Adrenal gland (tissue), 19 donors: ENCODE measurements at regions of chr9 and their contacts with region 1.

Region 1: GRCh38 chr9:130689937-130690700 is 3.5 kb upstream of the EXOSC2 start:
- DNase-seq: peak; percentile 77 to 92 (median 90)
- H3K4me3 ChIP-seq: peak overlapping the region in 1 of 4 donors; percentile 45
- H3K27ac ChIP-seq: peak overlapping the region; percentile 2 to 83 (median 62)
- H3K4me1 ChIP-seq: peaks cover 5 to 20% of the 10 kb centered on the region in 2 donors
- H3K27me3 ChIP-seq: no peaks in the 10 kb centered on the region
- CTCF ChIP-seq: no peak
- POLR2A ChIP-seq: peak; percentile 72 to 92

Region 2: GRCh38 chr9:130454096-130454811 is 235.9 kb before region 1 on chr9:
- intact Hi-C with region 1: loop called in 1 of 2 experiments (anchors 2 kb)
- DNase-seq: no peak
- H3K4me3 ChIP-seq: no peak overlapping the region
- H3K27ac ChIP-seq: peak overlapping the region in 1 of 5 donors; percentile 88
- H3K4me1 ChIP-seq: peaks cover 35 to 38% of the 10 kb centered on the region in 2 donors
- H3K27me3 ChIP-seq: no peaks in the 10 kb centered on the region
- CTCF ChIP-seq: no peak
- POLR2A ChIP-seq: no peak